Right ventricle myocardium inferior (tissue), 1 donor: ENCODE measurements at regions of chr9 and their contacts with region 1.

Region 1: GRCh38 chr9:133478851-133479711 is at the start of gene SLC2A6:
- DNase-seq: peak; percentile 95
- ATAC-seq: peak; percentile 98
- total RNA-seq, gene SLC2A6: 2.7 TPM

Region 2: GRCh38 chr9:133030317-133031129 is 448.6 kb before region 1 on chr9 and contains the start of gene GTF3C5:
- intact Hi-C with region 1: loop called (anchors 10 kb)
- DNase-seq: peak; percentile 95
- ATAC-seq: peak; percentile 99
- total RNA-seq, gene GTF3C5: 58.0 TPM

Region 3: GRCh38 chr9:133417541-133418461 is 61.3 kb before region 1 on chr9 and contains the start of gene REXO4:
- intact Hi-C with region 1: loop called (anchors 5 kb)
- DNase-seq: peak; percentile 92
- ATAC-seq: peak; percentile 97
- total RNA-seq, gene REXO4: 18.7 TPM

Region 4: GRCh38 chr9:133459476-133460404 is 19.3 kb before region 1 on chr9 and contains the start of gene CACFD1:
- intact Hi-C with region 1: loop called (anchors 2 kb)
- DNase-seq: peak; percentile 98
- ATAC-seq: peak; percentile 95
- total RNA-seq, gene CACFD1: 13.9 TPM